Ovary (tissue), 10 donors: ENCODE measurements at regions of chr12 and their contacts with region 1.

Region 1: GRCh38 chr12:57611108-57611809 is at the start of gene ARHGEF25:
- DNase-seq: peak; percentile 76 to 87 (median 82)
- H3K4me3 ChIP-seq: peak within 1 kb of the TSS; percentile 68
- H3K27ac ChIP-seq: peak within 1 kb of the TSS; percentile 56 to 84
- H3K4me1 ChIP-seq: peaks cover 3% of the 10 kb centered on the region
- H3K27me3 ChIP-seq: no peaks in the 10 kb centered on the region
- CTCF ChIP-seq: no peak
- EP300 ChIP-seq: no peak
- POLR2A ChIP-seq: peak; percentile 51
- total RNA-seq, gene ARHGEF25: 22.1 to 48.4 (median 37.1) TPM

Region 2: GRCh38 chr12:57520053-57520871 is 91.0 kb before region 1 on chr12 and contains the start of gene DDIT3:
- intact Hi-C with region 1: loop called in 1 of 4 experiments (anchors 5 kb)
- DNase-seq: peak; percentile 99 to 100 (median 100)
- H3K4me3 ChIP-seq: peak within 1 kb of the TSS; percentile 85
- H3K27ac ChIP-seq: peak within 1 kb of the TSS; percentile 96 to 98
- H3K4me1 ChIP-seq: peaks cover 16% of the 10 kb centered on the region
- H3K27me3 ChIP-seq: no peaks in the 10 kb centered on the region
- CTCF ChIP-seq: peak in 1 of 3 donors; percentile 27
- EP300 ChIP-seq: peak; percentile 72
- POLR2A ChIP-seq: peak; percentile 99
- total RNA-seq, gene DDIT3: 22.1 to 84.9 (median 29.2) TPM

Region 3: GRCh38 chr12:58346032-58346632 is 734.9 kb after region 1 on chr12:
- intact Hi-C with region 1: no loop called
- DNase-seq: no peak
- H3K4me3 ChIP-seq: no peak overlapping the region
- H3K27ac ChIP-seq: no peak overlapping the region
- H3K4me1 ChIP-seq: no peaks in the 10 kb centered on the region
- H3K27me3 ChIP-seq: no peaks in the 10 kb centered on the region
- CTCF ChIP-seq: peak; percentile 48 to 70 (median 63)
- EP300 ChIP-seq: no peak
- POLR2A ChIP-seq: no peak